AG04449 (cell line): ENCODE measurements at regions of chr11 and their contacts with region 1.

Region 1: DNA sequence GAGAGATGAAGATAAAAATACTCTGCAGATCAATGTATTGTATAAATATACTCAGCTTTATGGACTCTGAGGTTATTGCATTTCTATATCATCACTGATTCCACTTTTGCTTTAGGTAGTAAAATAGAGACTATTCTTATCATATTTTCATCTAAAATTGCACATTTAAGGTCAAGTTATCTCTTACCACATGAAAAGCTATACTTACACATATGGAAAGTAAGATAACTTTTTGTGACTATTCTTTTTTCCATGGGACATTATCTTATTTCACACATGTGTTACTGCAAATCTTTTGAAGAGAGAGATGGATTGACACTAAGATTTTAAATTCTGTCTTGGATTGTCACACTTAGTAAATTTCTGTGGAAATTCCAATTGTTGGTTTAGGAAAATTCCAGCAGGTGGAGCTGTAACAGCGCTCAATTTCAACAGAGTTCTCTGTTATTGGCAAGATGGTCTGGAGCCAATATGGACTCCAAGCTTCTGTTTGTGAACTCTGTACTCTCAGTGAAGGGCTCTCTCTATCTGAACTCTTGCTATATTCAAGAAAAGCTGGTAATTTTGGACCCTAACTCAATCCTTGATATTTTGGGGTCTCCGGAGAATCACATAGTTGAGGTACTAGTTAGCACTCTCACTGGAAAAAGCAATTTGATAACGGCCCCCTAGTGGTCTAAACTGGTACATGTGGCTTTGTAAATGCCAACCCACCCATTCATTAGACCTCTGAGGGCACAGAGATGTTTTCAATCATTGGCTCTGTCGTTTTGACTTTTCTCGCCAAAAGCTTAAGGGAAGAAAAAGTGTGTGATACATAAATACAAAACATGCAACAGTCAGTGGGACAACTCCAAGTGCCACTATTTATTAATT is 429.7 kb downstream of the ETS1 start:
- DNase-seq: no peak
- H3K4me3 ChIP-seq: peak overlapping the region; percentile 41
- CTCF ChIP-seq: peak; percentile 75

Region 2: DNA sequence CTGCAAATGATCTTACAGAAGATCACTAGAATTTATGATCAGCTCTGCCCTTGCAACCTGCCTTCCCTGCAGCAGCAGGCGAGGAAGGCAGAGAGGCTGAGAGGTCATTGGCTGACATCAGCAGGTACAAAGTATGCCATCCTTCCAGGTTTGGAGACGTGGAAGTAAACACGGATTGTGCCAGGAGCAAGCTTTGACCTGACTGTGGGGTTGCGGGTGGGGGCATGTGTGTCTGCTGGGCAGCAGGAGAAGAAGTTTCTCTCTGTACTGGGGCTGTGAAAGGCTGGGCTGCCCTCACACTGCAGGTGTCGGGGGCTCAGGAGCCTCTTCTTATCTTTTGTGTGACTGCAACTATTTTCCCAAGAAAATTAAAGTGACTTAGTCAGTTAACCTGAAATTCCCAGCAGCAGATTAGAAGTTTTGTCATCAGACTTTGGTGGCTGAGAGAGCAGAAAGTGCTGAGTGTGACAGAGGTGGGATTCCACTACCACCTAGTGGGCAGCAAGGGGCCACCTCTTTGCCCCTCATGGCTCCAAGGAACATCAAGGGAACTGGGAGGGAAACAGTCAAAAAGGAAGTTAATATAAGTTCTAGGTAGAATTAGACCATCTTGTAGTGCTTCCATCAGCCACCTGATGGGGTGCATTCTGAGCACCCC is 136.2 kb before region 1 on chr11:
- CTCF ChIA-PET with region 1: interaction called, 20 read pairs
- POLR2A ChIA-PET with region 1: no interaction called
- DNase-seq: no peak
- H3K4me3 ChIP-seq: no peak overlapping the region
- CTCF ChIP-seq: peak; percentile 52

Region 3: DNA sequence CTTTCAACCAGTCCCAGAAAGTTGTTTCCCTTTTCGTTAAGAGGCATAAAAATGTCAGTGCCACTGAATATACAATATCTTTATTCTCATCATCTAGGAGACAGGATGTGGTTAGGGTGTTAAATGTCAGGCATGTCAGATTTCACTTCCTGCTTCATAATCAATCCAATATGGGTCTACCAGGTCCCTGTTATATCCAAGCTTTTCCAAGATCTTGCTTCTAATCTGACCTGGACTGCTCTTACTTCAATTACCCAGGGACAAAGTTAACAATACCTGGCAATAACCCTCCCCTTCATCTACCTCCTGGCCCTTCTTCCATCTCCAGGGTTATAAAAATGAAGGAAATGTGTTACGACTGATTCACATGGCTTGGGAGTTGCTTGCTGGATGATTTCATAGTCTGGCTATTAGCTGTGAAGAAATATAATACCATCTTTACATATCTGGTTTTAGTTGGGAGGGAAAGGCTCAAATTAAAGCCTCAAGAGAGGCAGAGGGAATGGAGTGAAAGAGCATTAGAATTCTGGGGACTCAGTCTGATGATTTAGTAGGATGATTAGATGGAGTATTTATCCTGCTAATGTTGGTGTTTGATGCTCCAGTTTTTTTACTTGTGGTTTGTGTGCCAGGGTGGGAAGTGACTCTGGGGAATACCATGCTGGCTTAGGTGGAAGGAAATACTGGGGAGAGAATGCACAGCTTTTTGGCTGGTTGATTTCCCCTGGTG is 104.6 kb before region 1 on chr11:
- CTCF ChIA-PET with region 1: interaction called, 38 read pairs
- POLR2A ChIA-PET with region 1: no interaction called
- DNase-seq: peak; percentile 77
- H3K4me3 ChIP-seq: no peak overlapping the region
- CTCF ChIP-seq: no peak

Region 4: DNA sequence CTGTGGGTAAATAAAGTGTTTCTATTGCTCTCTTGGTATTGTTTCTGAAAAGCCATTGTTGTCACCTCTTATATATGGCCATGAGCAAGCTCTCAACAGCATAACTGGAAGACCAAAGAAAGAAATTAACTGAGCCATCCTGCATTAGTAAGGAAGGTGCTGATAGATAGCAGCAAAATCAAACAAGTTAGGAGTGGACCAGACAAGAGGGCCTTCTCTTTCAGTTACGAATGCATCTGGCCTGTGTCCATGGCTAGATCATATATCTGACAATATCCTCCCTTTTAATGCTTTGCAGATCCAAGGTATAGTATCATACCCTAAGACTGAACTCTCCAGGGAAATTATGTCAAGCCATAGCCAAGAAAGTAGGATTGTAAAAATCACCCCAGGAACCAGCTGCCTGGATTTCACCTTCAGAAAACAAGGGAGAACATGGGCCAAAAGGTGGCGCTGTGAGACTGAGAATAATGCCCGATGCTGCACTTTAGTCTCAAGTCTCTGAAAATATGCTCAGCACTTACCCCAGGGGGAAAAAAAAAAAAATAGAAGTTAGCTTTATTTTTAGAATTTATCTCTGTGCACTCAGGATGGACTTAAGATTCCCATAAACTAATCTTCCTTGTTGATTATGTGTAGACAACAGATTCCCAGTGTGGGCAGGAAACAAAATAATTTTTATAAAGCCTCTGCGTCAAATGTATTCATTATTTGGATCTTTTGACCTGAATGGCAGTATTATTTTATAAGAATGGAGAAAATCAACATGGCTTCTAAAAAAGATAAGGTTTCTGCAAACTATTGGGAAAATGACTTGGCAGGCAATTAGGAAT is 14.6 kb after region 1 on chr11:
- CTCF ChIA-PET with region 1: interaction called, 216 read pairs
- POLR2A ChIA-PET with region 1: no interaction called
- DNase-seq: peak; percentile 41
- H3K4me3 ChIP-seq: no peak overlapping the region
- CTCF ChIP-seq: peak; percentile 70

Region 5: DNA sequence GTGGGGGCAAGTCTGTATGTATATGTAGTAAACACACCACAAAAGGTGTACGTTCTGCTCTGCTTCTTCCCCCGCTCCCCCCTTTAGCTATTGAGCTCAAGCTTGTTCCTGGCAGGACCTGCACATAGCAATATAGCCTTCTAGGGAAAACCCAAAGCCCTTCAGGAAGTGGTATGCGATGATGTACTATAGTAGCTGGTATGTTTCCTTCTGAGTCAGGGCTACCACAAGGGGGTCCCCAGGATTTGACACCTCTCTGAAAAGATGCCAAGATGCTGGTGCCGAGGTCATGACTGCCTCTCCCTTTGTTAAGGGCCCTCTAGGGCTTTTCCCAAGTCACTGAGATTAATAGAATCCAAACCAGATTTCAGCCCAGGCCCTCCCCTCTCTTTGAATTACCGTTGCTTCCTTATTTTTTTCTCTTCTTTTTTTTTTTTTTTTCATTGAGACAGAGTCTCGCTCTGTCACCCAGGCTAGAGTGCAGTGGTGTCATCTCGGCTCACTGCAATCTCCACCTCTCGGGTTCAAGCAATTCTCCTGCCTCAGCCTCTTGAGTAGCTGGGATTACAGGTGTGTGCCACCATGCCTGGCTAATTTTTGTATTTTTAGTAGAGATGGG is 161.3 kb after region 1 on chr11:
- CTCF ChIA-PET with region 1: no interaction called
- POLR2A ChIA-PET with region 1: no interaction called
- DNase-seq: no peak
- H3K4me3 ChIP-seq: no peak overlapping the region
- CTCF ChIP-seq: no peak

Region 6: DNA sequence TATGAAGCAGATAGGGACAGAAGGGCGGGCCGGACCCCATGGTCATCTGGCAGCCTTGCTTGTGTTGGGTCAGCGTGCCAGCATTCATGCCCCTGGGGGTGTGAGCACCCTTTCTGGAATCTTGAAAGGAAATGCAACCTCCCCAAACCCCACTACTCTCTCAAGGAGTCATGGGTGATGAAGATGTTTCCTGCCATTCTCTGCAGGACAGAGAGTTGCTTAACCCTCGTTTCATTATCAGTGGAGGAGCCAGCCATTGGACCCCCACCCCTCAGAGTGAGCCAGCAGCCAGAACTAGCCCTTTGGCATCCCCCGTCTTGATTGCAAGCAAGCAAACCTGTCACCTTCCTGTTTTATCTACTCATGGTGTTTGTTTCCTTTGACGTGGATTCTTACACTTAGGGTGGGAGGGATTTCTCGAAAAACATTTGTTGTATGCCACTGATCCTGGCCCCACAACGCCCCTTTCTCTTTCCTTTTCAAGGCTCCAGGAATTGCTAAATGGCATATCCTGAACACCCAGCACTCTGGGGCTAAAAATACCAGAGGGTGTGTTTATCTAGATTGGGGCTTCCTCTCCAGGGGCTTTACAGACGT is 171.4 kb after region 1 on chr11:
- CTCF ChIA-PET with region 1: no interaction called
- POLR2A ChIA-PET with region 1: no interaction called
- DNase-seq: no peak
- H3K4me3 ChIP-seq: no peak overlapping the region
- CTCF ChIP-seq: no peak

Region 7: DNA sequence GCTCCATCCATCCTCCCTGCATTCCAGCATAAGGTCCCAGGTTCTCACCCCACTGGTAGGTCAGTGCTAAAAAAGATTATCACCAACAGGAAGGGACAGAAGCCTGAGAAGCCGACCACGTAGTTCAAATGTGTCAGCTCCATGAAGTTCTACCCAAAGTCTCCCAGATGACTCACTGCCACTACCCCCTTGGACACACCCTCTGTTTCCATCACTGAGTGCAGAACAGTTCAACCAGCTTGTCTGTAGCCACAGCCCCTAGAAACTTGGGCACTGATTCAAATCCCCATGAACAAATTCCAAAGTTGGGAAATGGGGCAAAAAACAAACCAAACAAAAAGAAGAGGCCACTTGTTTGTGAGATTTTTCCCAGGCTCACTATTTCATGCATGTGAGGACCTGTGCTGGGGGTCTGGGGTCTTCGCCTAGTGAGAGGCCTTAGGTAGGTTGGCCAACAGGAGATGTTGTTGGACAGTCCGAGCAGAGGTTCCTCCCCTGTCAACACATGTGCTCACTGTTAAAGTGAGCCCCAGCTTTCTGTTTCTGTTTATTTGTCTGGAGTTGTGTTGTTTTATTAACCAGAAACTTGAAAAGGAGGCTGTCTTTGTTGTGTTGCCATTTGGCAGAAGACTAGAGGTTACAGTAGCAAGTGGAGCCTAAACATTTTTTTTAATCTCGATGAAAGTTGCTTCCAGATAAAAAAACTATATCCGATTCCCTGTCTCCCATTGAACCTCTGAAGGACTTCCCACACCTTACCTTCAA is 512.0 kb after region 1 on chr11:
- CTCF ChIA-PET with region 1: interaction called, 12 read pairs
- POLR2A ChIA-PET with region 1: no interaction called
- DNase-seq: no peak
- H3K4me3 ChIP-seq: no peak overlapping the region
- CTCF ChIP-seq: no peak

Region 8: GRCh38 chr11:128848815-128849455 is 691.3 kb after region 1 on chr11:
- CTCF ChIA-PET with region 1: interaction called, 37 read pairs
- POLR2A ChIA-PET with region 1: no interaction called
- DNase-seq: no peak
- H3K4me3 ChIP-seq: no peak overlapping the region
- CTCF ChIP-seq: peak; percentile 76